ENCODE measurements at regions of chr6 and their contacts with region 1.

Region 1: DNA sequence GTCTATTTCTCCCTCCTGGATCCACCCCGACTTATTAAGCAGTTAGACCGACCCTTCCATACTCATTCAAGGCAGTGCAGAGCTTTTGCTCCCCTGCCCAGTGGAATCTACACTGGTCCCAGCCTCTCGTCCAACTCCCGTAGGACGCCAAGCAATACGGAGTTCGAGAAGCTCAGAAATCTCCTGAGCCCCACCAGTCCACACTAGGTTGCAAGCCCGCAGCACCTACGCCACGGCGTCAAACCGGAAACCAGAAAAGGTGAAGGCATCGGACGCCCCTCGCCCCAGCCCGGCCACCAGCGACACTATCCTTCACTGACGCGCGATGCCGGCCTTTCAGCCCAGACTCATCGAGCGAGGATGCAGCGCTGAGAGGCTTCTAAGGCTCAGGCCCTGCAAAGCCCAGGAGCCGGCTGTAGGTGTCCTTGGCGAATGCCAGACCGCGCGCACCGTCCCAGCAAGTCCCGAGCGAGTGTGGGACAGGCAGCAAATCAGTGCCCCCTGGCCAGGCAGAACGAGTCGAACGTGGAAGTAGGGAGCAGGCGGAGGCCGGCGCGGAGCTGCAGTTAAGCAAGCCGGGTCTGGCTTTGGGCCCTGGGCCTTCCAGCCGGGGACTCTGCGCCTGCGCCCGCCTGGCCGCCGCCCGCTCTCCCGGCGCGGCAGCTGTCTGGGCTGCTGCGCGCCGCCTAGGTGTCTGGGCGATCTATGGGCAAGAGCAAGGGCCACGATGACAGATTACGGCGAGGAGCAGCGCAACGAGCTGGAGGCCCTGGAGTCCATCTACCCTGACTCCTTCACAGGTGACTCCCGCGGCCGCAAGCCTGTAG is at the start of gene RWDD1:
- DNase-seq: peak; percentile 99
- H3K4me3 Mint-ChIP-seq: peak within 1 kb of the TSS; percentile 95
- H3K27ac Mint-ChIP-seq: peak within 1 kb of the TSS; percentile 96
- H3K4me1 Mint-ChIP-seq: peaks cover 25% of the 10 kb centered on the region
- H3K27me3 Mint-ChIP-seq: peaks cover 1% of the 10 kb centered on the region
- total RNA-seq, gene RWDD1: 44.4 and 46.8 TPM in 2 replicates

Region 2: DNA sequence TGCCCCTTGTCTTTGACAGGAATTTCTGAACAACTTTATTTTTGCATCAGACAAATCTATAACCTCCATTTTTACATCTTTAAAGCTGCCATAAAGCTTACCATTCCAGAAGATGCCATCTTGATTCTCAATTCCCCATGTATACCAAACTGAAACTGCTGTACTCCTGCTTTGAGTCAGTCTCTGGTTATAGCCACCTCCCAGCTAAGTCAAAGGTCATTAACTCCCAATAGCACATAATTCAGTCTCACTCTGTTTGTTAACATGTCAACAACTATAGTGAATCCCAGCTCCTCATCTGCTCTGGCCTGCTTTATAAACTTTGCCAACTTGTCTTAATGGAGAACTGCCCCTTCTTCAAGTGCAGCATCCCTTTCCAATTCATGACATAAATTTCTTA is 854.0 kb before region 1 on chr6:
- intact Hi-C with region 1: no loop called
- DNase-seq: no peak
- H3K4me3 Mint-ChIP-seq: no peak overlapping the region
- H3K27ac Mint-ChIP-seq: no peak overlapping the region
- H3K4me1 Mint-ChIP-seq: no peaks in the 10 kb centered on the region
- H3K27me3 Mint-ChIP-seq: no peaks in the 10 kb centered on the region

Region 3: GRCh38 chr6:116100419-116101301 is 470.4 kb before region 1 on chr6 and contains the start of gene NT5DC1:
- intact Hi-C with region 1: loop called (anchors 1 kb)
- DNase-seq: peak; percentile 96
- H3K4me3 Mint-ChIP-seq: peak within 1 kb of the TSS; percentile 95
- H3K27ac Mint-ChIP-seq: peak within 1 kb of the TSS; percentile 92
- H3K4me1 Mint-ChIP-seq: peaks cover 38% of the 10 kb centered on the region
- H3K27me3 Mint-ChIP-seq: no peaks in the 10 kb centered on the region
- total RNA-seq, gene NT5DC1: 38.1 and 38.9 TPM in 2 replicates

Region 4: GRCh38 chr6:116279260-116280063 is 291.6 kb before region 1 on chr6 and contains the start of gene TSPYL1:
- intact Hi-C with region 1: loop called (anchors 1 kb)
- DNase-seq: peak; percentile 98
- H3K4me3 Mint-ChIP-seq: peak within 1 kb of the TSS; percentile 99
- H3K27ac Mint-ChIP-seq: peak within 1 kb of the TSS; percentile 98
- H3K4me1 Mint-ChIP-seq: peaks cover 42% of the 10 kb centered on the region
- H3K27me3 Mint-ChIP-seq: peaks cover 5% of the 10 kb centered on the region
- total RNA-seq, gene TSPYL1: 39.1 and 41.2 TPM in 2 replicates

Region 5: DNA sequence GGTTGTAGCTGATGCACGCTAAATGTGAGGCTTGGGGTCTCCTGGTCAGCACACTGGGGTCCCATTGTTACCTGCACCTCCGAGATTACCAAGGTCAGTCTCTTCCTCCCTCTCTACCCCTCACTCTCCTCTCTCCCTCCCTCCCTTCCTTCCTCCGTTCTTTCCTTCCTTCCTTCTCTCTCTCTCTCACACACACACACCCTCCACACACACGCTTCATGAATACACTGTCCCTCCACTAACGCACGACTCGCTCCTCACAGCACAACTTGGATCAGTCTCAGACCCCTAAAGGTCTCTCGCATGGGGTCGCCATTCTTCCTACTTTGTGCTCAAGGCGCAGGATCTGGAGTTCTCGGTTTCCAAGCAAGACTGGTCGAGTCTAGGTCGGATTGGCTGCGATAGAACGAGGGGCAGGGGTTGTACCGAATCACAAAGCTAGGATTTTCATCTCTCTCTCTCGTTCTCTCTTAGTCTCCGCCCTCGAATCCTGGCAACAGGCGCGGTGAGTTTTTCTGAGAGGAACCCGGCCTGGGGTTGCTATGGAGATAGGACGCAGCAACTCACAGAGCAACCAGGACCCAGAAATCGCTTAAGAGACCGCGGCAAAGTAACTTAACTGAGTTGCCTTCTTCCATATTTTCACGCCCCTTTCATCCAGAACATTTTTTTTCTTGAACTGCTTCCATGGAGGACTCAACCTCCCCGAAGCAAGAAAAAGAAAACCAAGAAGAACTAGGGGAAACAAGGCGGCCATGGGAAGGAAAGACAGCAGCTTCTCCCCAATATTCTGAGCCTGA is 45.1 kb after region 1 on chr6 and contains the start of gene RSPH4A:
- intact Hi-C with region 1: loop called (anchors 2 kb)
- DNase-seq: peak; percentile 92
- H3K4me3 Mint-ChIP-seq: peak within 1 kb of the TSS; percentile 85
- H3K27ac Mint-ChIP-seq: no peak within 1 kb of the TSS
- H3K4me1 Mint-ChIP-seq: peaks cover 15% of the 10 kb centered on the region
- H3K27me3 Mint-ChIP-seq: peaks cover 51% of the 10 kb centered on the region
- total RNA-seq, gene RSPH4A: 0.14 and 0.21 TPM in 2 replicates

Region 6: GRCh38 chr6:116680975-116681808 is 110.1 kb after region 1 on chr6 and contains the start of gene KPNA5:
- intact Hi-C with region 1: loop called (anchors 1 kb)
- DNase-seq: peak; percentile 97
- H3K4me3 Mint-ChIP-seq: peak within 1 kb of the TSS; percentile 99
- H3K27ac Mint-ChIP-seq: peak within 1 kb of the TSS; percentile 99
- H3K4me1 Mint-ChIP-seq: peaks cover 29% of the 10 kb centered on the region
- H3K27me3 Mint-ChIP-seq: no peaks in the 10 kb centered on the region
- total RNA-seq, gene KPNA5: 7.2 and 7.7 TPM in 2 replicates